AG04449 (cell line): ENCODE measurements at regions of chr6 and their contacts with region 1.

Region 1: DNA sequence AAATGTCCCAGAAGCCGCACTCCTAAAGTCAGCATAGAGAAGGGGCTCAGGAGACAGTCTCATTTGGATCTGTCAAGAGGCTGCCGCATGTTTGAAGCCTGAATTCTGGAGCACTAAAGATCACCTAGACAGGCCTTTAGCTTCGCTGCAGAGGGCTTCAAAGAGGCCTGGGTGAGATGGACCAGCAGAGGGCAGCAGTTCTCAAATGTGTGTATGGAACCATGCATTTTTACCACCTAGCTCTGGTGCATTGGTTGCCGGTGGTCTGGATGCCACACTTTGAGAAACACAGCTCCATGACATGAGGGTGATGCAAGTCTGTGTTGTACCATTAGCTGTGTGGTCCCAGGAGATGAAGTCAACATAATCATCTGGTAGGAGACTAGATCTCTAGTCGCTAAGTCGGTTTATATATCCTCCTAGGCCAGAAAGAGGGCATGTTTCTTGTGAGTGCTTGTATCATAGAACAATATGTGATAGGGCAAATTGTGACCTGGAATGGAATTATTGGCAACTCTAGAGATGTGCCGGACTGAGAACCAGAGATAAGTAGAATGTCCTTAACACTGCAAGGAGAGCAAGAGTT is 64.8 kb downstream of the KIAA0319 start:
- DNase-seq: no peak
- H3K4me3 ChIP-seq: no peak overlapping the region
- CTCF ChIP-seq: peak; percentile 82

Region 2: GRCh38 chr6:24385536-24386269 is 195.5 kb before region 1 on chr6:
- CTCF ChIA-PET with region 1: no interaction called
- POLR2A ChIA-PET with region 1: no interaction called
- DNase-seq: no peak
- H3K4me3 ChIP-seq: no peak overlapping the region
- CTCF ChIP-seq: no peak

Region 3: DNA sequence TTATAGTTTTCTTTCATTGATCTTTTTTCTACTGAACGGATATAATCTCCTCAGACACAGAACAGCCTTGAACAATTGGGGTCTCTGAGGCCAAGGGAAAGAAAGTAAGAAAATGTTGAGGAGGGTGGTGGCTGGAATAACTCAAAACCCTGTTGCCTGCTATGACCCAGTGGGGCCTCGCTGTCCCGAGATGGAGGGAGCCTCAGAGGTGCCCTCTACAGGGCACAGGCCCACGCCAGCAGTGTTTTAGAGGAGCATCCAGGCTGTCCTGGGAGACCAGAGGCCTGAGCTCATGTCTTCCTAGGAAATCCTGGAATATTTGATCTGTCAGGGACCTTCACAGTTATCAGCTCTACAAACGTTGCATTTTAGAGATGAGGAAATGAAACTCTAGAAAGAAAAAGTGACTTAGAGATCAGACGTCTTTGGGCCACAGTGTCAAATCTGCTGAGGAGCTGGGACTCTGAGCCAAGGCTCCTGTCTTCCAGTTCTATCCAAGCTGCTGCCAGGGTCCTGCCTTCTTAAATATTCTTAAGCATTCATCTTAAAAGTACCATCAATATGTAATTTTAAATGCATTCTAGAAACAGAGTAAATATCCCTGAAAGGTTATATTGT is 60.1 kb before region 1 on chr6:
- CTCF ChIA-PET with region 1: interaction called, 22 read pairs
- POLR2A ChIA-PET with region 1: no interaction called
- DNase-seq: no peak
- H3K4me3 ChIP-seq: no peak overlapping the region
- CTCF ChIP-seq: peak; percentile 81

Region 4: GRCh38 chr6:24595512-24596217 is 14.5 kb after region 1 on chr6:
- CTCF ChIA-PET with region 1: interaction called, 18 read pairs
- POLR2A ChIA-PET with region 1: no interaction called
- DNase-seq: no peak
- H3K4me3 ChIP-seq: no peak overlapping the region
- CTCF ChIP-seq: no peak

Region 5: GRCh38 chr6:24666641-24667377 is 85.6 kb after region 1 on chr6 and contains the starts of genes ACOT13 and TDP2:
- CTCF ChIA-PET with region 1: interaction called, 16 read pairs
- POLR2A ChIA-PET with region 1: no interaction called
- DNase-seq: peak; percentile 71
- H3K4me3 ChIP-seq: peak within 1 kb of the TSS; percentile 100
- CTCF ChIP-seq: peak; percentile 66

Region 6: DNA sequence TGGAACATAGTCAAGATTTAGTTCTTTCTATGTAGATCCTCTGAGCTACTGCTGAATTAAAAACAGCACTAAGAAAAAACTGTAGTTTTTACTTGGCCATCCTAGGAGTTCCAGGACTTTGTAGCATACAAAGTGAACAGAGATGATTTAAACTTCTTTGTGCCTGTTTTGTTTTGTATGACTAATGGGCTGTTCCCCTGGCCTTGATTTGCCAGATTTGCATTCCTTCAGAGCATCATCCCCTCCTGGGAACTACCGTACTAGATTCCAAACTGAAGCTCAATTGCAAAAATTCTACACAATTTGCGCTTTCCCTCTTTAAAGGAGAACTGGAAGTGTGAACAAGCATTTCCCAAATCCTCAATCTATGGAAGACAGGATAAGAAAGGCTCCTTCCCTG is 108.8 kb after region 1 on chr6:
- CTCF ChIA-PET with region 1: interaction called, 190 read pairs
- POLR2A ChIA-PET with region 1: no interaction called
- DNase-seq: no peak
- H3K4me3 ChIP-seq: no peak overlapping the region
- CTCF ChIP-seq: no peak

Region 7: GRCh38 chr6:24761193-24761835 is 180.1 kb after region 1 on chr6:
- CTCF ChIA-PET with region 1: interaction called, 85 read pairs
- POLR2A ChIA-PET with region 1: no interaction called
- DNase-seq: no peak
- H3K4me3 ChIP-seq: no peak overlapping the region
- CTCF ChIP-seq: no peak

Region 8: DNA sequence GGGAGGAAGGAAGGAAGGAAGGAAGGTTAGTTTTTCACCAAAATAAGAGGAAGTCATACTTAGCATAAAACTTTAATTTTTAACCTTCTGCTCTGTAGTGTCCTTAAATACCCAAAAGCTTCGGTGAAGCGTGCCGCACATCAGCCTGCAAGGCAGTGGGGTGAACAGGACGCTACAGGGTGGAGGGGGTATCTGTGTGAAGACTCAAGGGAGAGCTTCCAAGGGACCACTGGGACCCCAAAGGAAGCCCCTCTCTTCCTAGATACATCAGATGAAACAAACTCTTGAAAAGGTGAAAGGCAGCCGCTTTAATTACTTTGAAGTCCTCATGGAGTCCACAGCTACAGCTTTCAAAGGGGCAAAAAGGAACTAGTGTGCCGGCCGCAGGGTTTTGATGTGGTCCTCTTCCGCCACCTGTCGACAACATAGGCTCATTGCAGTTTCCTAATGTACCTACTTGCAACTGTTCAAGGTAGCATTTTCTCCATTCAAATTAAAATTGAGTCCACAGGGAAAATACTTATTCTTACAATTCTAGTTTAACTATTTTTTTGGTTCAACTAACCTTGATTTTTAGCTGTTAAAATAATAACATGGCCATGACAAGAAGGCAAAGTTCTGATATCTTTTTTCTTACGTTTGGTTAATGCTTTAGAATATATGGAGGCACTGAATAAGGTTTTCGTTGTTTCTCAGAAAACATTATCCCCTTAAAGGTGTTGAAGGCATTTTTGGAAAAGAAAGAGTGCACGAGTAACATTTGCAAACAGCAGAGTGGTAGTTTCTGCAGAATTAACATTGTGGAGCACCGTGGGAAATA is 489.6 kb after region 1 on chr6:
- CTCF ChIA-PET with region 1: interaction called, 11 read pairs
- POLR2A ChIA-PET with region 1: no interaction called
- DNase-seq: no peak
- H3K4me3 ChIP-seq: no peak overlapping the region
- CTCF ChIP-seq: peak; percentile 80

Region 9: DNA sequence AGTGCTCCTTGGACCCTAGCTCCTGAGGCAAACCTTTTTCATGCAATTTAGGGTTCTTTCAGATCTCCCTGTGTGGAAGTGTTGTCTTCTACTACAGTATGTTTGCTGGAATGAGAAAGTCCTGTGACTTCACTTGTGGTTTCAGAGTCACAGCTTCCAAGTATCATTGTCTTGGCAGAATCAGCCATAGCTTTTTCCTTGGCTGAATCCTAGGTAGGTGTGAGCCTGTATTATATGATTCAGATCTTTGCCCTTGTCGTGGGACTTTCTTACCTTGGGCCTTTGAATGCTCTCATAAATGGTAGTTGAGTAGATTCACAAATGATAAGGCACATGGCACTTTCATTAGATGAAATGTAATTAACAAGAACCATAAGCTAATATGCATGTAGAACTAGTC is 714.5 kb after region 1 on chr6:
- CTCF ChIA-PET with region 1: no interaction called
- POLR2A ChIA-PET with region 1: no interaction called
- DNase-seq: no peak
- H3K4me3 ChIP-seq: no peak overlapping the region
- CTCF ChIP-seq: no peak